ENCODE measurements at regions of chr15 and their contacts with region 1.

Region 1: DNA sequence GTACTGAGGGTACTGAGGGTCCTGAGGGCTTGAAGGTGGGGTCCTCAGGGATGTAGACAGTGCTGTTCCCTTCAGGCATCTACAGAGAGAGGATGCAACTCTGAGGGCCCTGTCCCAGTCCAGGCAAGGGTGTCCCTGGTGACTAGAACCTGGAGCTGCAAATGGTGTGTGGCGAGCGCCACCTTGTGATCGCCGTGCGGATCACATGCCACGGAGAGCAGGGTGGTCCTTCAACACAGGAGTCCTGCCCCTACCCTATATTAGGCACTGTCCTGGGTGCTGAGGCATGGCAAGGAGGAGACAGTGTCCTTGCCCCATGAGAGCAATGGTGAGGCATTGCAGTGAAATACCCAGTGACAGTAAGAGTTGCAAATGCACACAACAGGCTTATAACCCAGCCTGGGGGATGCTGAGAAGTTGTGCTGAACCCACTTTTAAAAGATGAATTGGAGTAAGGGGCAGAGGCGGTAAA is 23.6 kb downstream of the RHCG start:
- DNase-seq: peak; percentile 90

Region 2: DNA sequence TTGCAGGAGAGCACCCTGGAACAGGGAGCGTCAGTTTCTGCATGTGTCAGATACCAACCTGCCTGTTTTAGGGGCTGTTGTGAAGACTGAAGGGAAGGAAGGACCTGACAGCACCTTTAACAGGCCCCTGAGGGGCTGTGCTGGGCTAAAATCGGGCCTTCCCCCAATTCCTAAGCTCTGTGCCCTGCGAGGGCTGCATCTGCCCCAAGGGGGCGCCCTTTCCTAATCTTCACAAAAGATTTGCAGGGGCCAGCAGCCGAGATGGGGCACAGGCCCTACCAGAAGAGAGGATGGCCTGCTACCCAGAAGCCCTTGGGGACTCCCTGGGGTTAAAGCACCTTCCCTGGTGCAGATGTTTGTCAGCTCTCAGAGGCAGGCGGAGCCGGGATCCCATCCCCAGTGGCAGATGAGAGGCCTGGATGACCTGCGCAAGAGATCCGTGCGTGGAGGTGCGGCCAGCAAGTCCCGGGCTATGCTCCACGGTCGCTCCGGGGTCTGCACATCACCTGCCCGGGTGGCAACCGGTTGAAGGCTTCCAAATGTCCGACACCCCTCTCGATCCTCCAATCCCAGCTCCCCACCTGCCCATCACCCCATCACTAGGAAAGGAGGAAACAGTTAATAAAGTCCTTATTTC is 30.0 kb before region 1 on chr15:
- CTCF ChIA-PET with region 1: interaction called, 54 read pairs
- POLR2A ChIA-PET with region 1: interaction called, 3 read pairs
- DNase-seq: peak; percentile 86

Region 3: GRCh38 chr15:89500397-89501270 is 27.8 kb after region 1 on chr15:
- CTCF ChIA-PET with region 1: no interaction called
- POLR2A ChIA-PET with region 1: no interaction called
- DNase-seq: no peak

Region 4: GRCh38 chr15:89893696-89894455 is 421.1 kb after region 1 on chr15 and contains the start of gene AP3S2:
- CTCF ChIA-PET with region 1: no interaction called
- POLR2A ChIA-PET with region 1: no interaction called
- DNase-seq: peak; percentile 90

Measured in HEK293T (cell line).